ENCODE measurements at regions of chr9 and their contacts with region 1.

Region 1: DNA sequence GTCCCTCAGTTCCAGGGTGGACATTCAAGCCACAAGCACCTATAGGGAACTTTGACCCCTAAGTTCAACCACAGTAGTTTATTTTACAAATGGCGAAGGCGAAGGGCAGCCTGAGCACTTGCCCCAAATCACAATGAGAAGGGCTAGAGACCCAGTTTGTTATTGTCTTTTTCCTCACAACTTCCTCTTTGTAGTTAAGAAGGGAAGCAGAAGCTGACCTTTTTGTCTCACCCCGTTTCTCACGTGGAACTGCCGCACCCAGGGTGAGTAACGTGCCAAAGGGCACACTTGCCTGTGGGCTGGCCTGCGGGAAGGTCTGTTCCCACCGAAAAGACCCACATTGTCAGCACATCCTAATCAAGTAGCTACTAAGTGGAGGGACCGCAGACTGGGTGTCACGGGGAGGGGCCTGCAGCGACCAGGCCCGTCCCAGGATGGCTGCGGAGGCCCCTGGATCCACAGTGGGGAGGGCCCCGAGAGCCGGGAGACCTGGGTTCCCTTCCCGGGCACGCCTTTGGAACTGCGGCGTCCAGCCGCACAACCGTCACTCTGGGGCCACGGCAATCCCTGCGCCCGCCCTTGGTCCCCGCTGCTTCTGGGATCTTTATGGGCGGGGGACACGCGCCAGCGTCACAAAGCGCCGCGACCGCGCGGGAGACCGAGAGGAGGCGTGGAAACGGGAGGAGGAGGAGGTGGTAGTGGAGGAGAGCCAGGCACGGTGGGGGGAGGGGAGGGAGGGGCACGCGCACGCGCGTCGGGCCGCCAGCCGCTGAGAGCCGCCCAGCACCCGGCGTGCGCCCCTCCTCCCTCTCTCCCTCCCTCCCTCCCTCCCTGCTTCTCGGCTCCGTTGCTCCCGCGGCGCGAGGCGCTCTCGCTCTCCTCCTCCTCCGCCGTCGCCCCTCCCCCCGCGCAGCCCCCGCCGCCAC is at the start of gene UBE2R2:
- DNase-seq: peak; percentile 94
- H3K4me3 Mint-ChIP-seq: peak within 1 kb of the TSS; percentile 93
- H3K27ac Mint-ChIP-seq: peak within 1 kb of the TSS; percentile 96
- H3K4me1 Mint-ChIP-seq: peaks cover 51% of the 10 kb centered on the region
- H3K27me3 Mint-ChIP-seq: no peaks in the 10 kb centered on the region
- total RNA-seq, gene UBE2R2: 44.2 to 46.9 TPM

Region 2: DNA sequence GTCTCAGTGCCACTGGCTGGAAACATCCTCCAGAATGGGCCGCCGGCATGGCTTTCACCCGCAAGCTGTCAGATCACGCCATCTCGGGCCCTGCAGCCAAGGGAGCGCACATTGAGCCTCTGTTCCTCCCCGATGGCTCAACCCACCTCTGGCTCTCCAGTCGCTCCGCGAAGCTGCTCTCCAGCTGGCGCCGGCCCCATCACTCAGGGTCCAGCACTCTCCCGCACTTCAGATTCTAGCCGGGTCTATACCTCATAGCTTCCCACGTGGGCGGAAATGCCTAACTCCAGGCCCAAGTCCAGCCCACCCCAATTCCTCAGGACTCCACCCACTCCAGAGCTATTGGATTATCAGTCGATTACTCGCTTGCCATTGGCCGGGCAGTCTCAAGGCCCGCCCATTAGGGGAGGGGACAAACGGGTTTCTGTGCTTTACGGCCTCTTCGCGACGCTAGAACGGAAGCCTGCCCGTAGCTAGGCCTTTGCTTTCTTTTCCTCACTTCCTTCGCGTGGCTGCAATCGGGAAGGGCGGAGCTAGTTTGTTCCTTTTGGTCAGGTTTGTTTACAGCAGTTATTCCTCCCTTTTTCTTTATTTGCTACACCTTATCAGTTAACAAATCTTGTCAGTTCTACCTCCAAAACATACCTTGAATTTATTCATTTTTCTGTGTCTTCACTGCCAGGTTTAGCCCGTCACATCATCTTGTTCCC is 342.8 kb before region 1 on chr9 and contains the start of gene NOL6:
- CTCF ChIA-PET with region 1: no interaction called
- intact Hi-C with region 1: loop called (anchors 10 kb)
- DNase-seq: peak; percentile 99
- H3K4me3 Mint-ChIP-seq: peak within 1 kb of the TSS; percentile 95
- H3K27ac Mint-ChIP-seq: peak within 1 kb of the TSS; percentile 93
- H3K4me1 Mint-ChIP-seq: peaks cover 29% of the 10 kb centered on the region
- H3K27me3 Mint-ChIP-seq: no peaks in the 10 kb centered on the region
- total RNA-seq, gene NOL6: 38.2 to 38.6 TPM

Region 3: GRCh38 chr9:33611358-33611757 is 205.2 kb before region 1 on chr9:
- CTCF ChIA-PET with region 1: no interaction called
- intact Hi-C with region 1: no loop called
- DNase-seq: no peak
- H3K4me3 Mint-ChIP-seq: no peak overlapping the region
- H3K27ac Mint-ChIP-seq: no peak overlapping the region
- H3K4me1 Mint-ChIP-seq: no peaks in the 10 kb centered on the region
- H3K27me3 Mint-ChIP-seq: peaks cover 13% of the 10 kb centered on the region

Region 4: DNA sequence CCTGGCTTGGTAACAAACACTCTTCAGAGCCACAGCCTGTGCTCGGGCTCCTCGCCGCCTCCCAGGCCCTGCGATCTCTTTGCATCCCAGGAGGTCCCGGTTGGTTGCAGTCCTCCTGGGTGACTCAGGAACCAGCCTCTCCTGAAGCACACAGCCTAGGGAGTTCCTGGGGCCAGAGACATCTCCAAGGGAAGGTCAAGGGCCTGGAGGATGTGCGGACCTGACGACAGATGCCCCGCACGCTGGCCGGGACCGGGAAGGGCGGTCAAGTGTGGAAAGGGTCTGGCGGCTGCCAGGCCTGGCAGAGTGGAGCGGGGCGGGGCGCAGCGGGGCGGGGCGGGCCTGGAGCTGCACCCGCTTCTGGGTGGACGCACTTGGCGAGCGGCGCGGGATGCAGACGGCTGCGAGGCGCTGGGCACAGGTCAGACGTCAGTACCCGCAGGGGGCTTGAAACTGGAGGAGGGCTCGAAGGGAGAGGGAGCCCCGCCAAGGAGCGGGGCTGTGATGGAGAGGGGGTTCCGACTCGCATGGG is 66.2 kb before region 1 on chr9:
- CTCF ChIA-PET with region 1: no interaction called
- intact Hi-C with region 1: no loop called
- DNase-seq: no peak
- H3K4me3 Mint-ChIP-seq: no peak overlapping the region
- H3K27ac Mint-ChIP-seq: no peak overlapping the region
- H3K4me1 Mint-ChIP-seq: peaks cover 25% of the 10 kb centered on the region
- H3K27me3 Mint-ChIP-seq: peaks cover 72% of the 10 kb centered on the region

Region 5: DNA sequence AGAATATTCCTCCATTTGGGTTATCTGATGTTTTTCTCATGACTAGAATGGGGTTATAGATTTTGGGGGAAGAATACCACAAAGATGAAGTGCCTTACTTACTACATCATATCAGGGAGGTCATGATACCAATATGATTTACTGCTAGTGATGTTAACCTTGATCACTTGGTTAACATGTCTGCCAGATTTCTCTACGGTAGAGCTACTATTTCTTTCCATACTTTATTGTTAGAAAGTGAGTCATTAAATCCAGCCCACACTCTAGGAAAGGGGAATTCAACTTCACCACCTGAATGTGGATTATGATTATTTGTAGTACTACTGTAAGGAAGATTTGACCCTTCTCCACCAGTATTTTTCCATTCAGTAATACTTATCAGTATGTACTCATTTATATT is 65.0 kb after region 1 on chr9:
- CTCF ChIA-PET with region 1: interaction called, 5 read pairs
- intact Hi-C with region 1: loop called (anchors 2 kb)
- DNase-seq: no peak
- H3K4me3 Mint-ChIP-seq: peak overlapping the region; percentile 30
- H3K27ac Mint-ChIP-seq: peak overlapping the region; percentile 90
- H3K4me1 Mint-ChIP-seq: peaks cover 60% of the 10 kb centered on the region
- H3K27me3 Mint-ChIP-seq: no peaks in the 10 kb centered on the region

Region 6: DNA sequence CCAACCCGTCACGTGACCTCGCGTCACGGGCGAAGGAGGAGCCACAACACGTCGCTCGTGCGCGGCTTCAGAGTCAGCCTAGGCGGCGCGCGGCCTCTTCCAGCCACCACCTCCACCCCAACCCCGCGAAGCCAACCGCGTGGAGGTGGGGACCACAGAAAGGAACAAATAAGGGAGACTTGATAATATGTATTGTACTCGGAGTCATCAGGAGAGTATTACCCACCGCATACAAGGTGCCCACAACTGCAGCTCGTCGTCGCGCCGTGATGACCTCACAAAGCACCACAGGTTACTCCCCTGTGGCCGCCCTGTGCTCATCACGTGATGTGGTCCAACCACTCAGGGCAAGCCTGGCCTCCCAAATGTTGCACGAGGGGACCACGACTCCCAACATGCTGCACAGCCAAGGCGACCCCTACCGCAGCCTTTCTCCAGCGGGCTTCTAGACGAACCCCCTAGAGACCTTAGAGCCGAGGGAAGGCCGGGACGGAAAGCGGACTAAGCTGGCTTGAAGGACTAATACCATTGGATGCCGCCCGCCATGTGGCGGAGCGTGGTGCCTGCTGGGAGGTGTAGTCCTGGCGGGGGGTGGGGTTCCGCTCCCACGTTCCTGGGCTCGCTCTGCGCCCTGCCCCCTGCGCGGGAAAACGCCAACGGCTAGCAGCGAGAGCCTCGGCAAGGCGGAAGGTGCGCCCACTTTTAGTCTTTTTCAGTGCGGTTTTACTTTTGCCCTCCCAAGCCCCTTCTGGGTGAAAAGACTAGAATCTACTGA is 232.5 kb after region 1 on chr9:
- CTCF ChIA-PET with region 1: interaction called, 4 read pairs
- intact Hi-C with region 1: loop called (anchors 1 kb)
- DNase-seq: peak; percentile 98
- H3K4me3 Mint-ChIP-seq: peak overlapping the region; percentile 91
- H3K27ac Mint-ChIP-seq: peak overlapping the region; percentile 98
- H3K4me1 Mint-ChIP-seq: peaks cover 33% of the 10 kb centered on the region
- H3K27me3 Mint-ChIP-seq: no peaks in the 10 kb centered on the region

Region 7: DNA sequence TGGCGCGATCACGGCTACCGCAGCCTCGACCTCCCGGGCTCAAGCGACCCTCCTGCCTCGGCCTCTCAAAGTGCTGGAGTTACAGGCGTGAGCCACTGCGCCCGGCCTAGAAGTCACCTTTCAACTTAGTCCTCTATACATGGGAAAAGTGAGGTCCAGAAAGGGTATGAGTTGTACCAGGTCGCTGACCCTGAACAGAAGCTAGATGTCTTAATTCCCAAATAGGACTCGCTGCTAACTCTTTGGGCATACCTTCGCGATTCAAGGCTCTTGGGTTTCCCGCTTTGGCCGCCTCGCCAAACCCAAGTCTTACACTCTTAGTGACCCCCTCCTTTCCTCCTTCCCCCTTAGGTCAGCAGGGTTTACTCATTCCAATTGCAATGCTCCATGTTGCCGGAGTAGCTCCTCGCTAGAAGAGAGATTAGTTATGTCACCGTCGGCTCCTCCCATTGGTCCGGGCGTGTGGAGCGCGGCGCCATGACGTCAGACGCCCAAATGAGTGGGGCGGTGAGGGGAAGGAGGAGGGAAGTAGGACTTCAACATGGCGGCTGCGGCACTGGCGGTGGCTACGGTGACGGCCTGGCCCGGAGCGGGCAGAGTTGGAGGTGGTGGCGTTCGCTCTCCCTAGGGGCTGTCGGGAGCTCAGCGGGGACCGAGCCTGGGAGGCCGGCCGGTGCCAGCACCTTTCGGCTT is 362.1 kb after region 1 on chr9 and contains the start of gene UBAP1:
- CTCF ChIA-PET with region 1: no interaction called
- intact Hi-C with region 1: loop called (anchors 2 kb)
- DNase-seq: peak; percentile 99
- H3K4me3 Mint-ChIP-seq: peak within 1 kb of the TSS; percentile 84
- H3K27ac Mint-ChIP-seq: peak within 1 kb of the TSS; percentile 94
- H3K4me1 Mint-ChIP-seq: peaks cover 16% of the 10 kb centered on the region
- H3K27me3 Mint-ChIP-seq: no peaks in the 10 kb centered on the region
- total RNA-seq, gene UBAP1: 29.9 to 31.7 TPM

Region 8: DNA sequence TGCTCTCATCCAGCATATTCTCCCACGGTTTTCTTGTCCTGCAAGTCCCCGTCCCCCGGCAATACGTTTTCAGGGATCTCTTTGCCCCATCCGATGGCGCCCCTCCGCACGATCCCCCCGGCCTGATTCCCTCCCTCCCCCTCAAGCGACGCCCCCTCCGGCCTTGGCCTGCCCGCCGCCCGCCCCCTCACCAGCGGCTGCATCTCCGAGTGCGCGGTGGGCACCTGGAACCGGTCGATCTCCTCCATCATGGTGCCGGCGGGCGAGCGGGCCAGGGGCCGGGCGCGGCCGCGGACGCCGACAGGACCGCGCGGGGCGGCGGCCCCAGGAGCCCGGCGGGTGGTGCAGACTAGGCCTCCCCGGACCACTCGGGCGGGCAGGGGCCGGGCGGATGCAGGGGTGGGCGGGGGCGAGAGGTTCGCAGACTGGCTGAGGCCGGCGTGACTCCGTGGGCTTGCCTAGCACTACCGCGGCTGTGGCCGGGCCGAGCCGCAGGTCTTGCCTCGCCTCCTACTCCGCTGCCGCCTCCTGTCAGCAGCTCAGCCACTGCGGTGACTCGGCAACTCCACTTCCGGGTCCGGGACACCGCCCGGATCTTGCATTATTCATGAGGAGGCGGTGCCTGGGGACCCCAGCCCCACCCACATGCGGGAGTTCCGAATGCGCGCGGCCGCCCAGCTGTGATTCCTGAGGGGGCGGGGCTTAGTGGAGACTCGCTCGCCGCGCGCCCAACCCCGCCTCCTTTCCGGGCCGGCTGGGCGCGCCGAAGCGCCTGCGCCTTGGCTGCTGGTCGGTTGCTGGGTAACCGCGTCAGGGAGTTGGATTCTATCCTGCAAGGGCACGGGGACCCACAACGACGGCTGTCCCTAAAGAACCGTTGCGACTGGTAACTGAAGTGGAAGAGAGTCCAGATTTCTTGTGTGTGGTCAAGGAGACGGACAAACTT is 641.7 kb after region 1 on chr9 and contains the starts of genes DNAI1 and FAM219A:
- CTCF ChIA-PET with region 1: no interaction called
- intact Hi-C with region 1: loop called (anchors 5 kb)
- DNase-seq: peak; percentile 99
- H3K4me3 Mint-ChIP-seq: peak within 1 kb of the TSS; percentile 87
- H3K27ac Mint-ChIP-seq: no peak within 1 kb of the TSS
- H3K4me1 Mint-ChIP-seq: peaks cover 43% of the 10 kb centered on the region
- H3K27me3 Mint-ChIP-seq: peaks cover 1% of the 10 kb centered on the region
- total RNA-seq, gene DNAI1: 0.26 TPM in 1 of 2 experiments, not detected in the other
- total RNA-seq, gene FAM219A: 11.1 to 11.6 TPM

Measured in activated naive CD4-positive, alpha-beta T cell treated with anti-CD3 and anti-CD28 coated beads for 36 hours (primary cell).